ENCODE measurements at regions of chr18 and their contacts with region 1.

Region 1: DNA sequence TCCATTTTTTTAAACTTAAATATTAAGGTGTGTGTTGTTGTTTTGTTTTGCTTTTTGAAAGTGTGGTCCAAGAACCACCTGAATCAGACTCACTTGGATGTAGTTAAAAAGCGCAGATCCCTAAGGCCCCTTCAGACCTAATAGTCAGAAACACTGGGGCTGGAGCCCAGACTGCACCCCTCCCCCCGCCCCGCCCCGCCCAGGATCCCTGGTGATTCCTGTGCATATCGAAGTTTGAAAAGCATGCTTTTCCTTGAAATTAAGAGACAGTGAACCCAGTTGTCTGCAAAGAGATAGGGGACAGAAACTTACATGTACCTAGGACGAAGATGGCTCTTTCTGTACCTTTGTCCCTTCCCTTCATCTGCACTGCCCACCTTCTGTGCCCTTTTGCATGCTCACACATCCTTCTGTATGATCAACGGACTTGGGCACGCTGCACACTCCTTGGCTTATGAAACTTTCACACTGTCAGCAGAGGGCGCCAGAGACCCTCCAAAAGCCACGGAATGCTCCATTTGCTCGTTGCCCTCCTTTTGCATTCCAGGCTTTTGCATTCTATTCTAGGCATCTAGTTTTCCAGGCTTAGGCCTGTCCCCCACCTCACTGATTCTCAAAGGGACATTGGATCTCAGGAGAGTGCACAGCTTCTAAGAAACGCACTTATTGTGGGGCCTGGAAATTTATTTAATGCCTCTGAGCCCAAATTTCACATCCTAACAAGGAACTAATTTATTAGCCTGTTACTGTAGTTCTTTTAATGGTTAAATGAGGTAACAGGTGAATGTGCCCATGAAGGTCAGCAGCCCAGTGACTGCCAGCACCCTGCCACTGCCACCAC is 32.8 kb upstream of the SLC14A1 start:
- DNase-seq: peak; percentile 58 to 88 (median 82)
- ATAC-seq: no peak
- H3K4me3 ChIP-seq: no peak overlapping the region
- H3K4me3 Mint-ChIP-seq: peak overlapping the region; percentile 35
- H3K27ac ChIP-seq: no peak overlapping the region
- H3K27ac Mint-ChIP-seq: no peak overlapping the region
- H3K4me1 ChIP-seq: peaks cover 49% of the 10 kb centered on the region
- H3K4me1 Mint-ChIP-seq: peaks cover 47% of the 10 kb centered on the region
- H3K27me3 ChIP-seq: no peaks in the 10 kb centered on the region
- H3K27me3 Mint-ChIP-seq: peaks cover 2% of the 10 kb centered on the region
- CTCF ChIP-seq: peak; percentile 81

Region 2: DNA sequence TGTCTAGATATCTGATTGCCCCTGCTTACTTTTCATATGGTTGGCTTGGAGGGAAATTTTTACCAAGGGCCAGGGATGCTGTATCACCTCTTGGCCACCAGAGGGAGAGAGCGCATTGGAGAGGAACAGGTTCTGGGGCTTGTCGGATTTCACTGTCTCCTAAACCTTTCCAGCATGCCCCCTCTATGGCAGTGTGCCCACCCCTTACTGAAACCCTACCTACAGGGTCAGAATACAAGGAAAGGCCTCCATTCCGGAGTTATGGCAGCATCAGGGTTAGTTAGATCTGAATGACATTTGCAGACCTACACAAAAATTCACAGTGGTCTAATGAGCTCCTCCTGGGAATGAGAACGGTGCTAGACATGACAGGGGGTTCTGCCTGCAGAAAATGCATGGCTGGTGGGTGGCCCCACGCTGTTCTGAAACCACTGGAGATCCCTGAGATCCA is 70.1 kb before region 1 on chr18:
- CTCF ChIA-PET with region 1: no interaction called
- POLR2A ChIA-PET with region 1: no interaction called
- intact Hi-C with region 1: loop called in 1 of 2 experiments (anchors 2 kb)
- DNase-seq: peak in 7 of 9 experiments; percentile 10 to 66 (median 39)
- ATAC-seq: peak; percentile 56
- H3K4me3 ChIP-seq: no peak overlapping the region
- H3K4me3 Mint-ChIP-seq: no peak overlapping the region
- H3K27ac ChIP-seq: no peak overlapping the region
- H3K27ac Mint-ChIP-seq: no peak overlapping the region
- H3K4me1 ChIP-seq: no peaks in the 10 kb centered on the region
- H3K4me1 Mint-ChIP-seq: no peaks in the 10 kb centered on the region
- H3K27me3 ChIP-seq: no peaks in the 10 kb centered on the region
- H3K27me3 Mint-ChIP-seq: peaks cover 16% of the 10 kb centered on the region
- CTCF ChIP-seq: peak; percentile 92

Region 3: GRCh38 chr18:45738658-45739057 is 47.5 kb after region 1 on chr18:
- CTCF ChIA-PET with region 1: no interaction called
- POLR2A ChIA-PET with region 1: no interaction called
- intact Hi-C with region 1: no loop called
- DNase-seq: no peak
- ATAC-seq: no peak
- H3K4me3 ChIP-seq: no peak overlapping the region
- H3K4me3 Mint-ChIP-seq: no peak overlapping the region
- H3K27ac ChIP-seq: no peak overlapping the region
- H3K27ac Mint-ChIP-seq: no peak overlapping the region
- H3K4me1 ChIP-seq: no peaks in the 10 kb centered on the region
- H3K4me1 Mint-ChIP-seq: no peaks in the 10 kb centered on the region
- H3K27me3 ChIP-seq: no peaks in the 10 kb centered on the region
- H3K27me3 Mint-ChIP-seq: no peaks in the 10 kb centered on the region
- CTCF ChIP-seq: no peak

Region 4: DNA sequence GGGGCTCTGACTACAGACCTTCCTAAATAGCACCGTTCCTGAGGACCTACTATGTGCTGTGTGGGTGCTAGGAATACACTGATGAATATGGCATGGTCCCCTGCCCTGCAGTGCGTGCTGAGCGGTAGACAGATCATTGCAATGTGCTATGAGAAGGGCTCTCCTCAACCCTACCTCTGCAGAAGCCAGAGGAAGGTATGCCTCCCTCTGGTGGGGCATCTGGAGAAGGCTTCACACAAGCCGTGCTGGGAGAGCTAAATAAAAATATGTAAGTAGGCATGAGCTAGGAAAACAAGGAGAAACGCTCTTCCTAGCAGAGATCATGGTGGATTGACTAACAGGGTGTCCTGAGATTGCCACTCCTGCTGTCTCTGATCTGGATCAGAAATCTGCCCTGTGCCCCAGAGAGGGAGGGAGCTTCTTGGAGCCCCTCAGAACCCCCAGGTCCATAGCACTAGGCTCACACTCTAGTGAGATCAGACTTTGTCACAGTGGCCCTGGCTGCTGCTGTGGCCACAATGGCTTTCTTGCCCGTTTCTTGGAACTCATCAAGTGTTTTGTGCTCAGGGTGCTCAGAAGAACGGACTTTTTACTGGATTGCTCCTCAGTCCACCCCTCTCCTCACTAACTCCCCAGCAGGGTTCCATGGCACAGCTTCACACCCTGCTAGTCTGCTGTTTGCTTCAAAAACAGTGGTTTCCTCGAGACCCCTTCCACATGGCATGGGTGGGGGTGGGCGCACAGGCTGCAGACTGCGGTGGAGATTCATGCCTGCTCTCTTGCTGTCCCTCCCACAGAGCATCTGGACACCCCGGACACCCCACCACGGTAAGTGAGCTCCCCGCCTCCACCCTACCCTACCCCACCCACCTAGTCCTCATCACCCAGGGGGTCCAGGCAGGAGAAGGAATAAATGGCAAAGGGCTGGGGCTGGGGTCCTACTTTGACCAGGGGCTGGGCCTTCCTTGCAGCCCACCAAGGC is 148.5 kb after region 1 on chr18:
- CTCF ChIA-PET with region 1: interaction called, 3 read pairs
- POLR2A ChIA-PET with region 1: interaction called, 3 read pairs
- intact Hi-C with region 1: loop called (anchors 1 to 2 kb)
- DNase-seq: peak in 3 of 9 experiments; percentile 49 to 56 (median 50)
- ATAC-seq: peak; percentile 72
- H3K4me3 ChIP-seq: no peak overlapping the region
- H3K4me3 Mint-ChIP-seq: no peak overlapping the region
- H3K27ac ChIP-seq: no peak overlapping the region
- H3K27ac Mint-ChIP-seq: no peak overlapping the region
- H3K4me1 ChIP-seq: peaks cover 8% of the 10 kb centered on the region
- H3K4me1 Mint-ChIP-seq: peaks cover 17% of the 10 kb centered on the region
- H3K27me3 ChIP-seq: peaks cover 0 to 11% of the 10 kb centered on the region in 2 experiments
- H3K27me3 Mint-ChIP-seq: peaks cover 36% of the 10 kb centered on the region
- CTCF ChIP-seq: no peak

Region 5: GRCh38 chr18:45930963-45931362 is 239.8 kb after region 1 on chr18:
- CTCF ChIA-PET with region 1: no interaction called
- POLR2A ChIA-PET with region 1: no interaction called
- intact Hi-C with region 1: no loop called
- DNase-seq: peak in 1 of 9 experiments; percentile 14
- ATAC-seq: peak; percentile 44
- H3K4me3 ChIP-seq: no peak overlapping the region
- H3K4me3 Mint-ChIP-seq: no peak overlapping the region
- H3K27ac ChIP-seq: no peak overlapping the region
- H3K27ac Mint-ChIP-seq: no peak overlapping the region
- H3K4me1 ChIP-seq: no peaks in the 10 kb centered on the region
- H3K4me1 Mint-ChIP-seq: peaks cover 6% of the 10 kb centered on the region
- H3K27me3 ChIP-seq: no peaks in the 10 kb centered on the region
- H3K27me3 Mint-ChIP-seq: no peaks in the 10 kb centered on the region
- CTCF ChIP-seq: no peak

Region 6: DNA sequence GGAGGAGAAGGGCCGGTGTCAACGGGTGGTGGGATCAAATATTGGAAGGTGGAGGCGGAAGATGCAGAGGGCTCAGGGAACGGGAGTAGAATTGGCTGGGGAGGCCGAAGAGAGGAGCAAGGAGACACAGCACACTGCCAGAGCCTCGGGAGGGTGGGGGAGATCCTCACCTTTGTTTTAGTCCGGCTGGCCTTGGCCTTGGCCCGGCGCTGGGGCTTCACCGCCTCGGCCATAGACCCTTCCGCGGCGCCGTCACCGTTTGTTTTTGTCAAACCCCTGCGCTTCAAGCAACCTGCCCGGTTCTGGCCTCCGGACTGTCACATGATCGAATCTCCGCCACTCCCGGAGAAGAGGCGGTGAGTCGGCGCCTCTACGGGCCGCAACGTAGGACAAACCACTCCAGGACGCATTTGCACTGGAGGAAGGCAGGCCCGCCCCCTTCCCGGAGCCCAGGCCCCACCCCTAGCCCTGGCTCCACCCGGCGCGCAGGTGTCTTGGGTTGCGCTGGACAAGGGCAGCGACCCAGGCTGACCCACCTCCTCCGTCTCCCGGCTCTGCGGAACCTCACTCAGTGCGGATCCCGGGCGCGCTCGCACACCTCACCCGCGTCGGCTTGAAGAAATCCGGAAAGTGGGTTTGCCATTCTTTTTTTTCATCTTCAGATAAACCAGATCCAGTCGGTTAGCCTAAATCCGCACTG is 276.0 kb after region 1 on chr18 and contains the start of gene EPG5:
- CTCF ChIA-PET with region 1: no interaction called
- POLR2A ChIA-PET with region 1: no interaction called
- intact Hi-C with region 1: loop called (anchors 1 kb)
- DNase-seq: peak; percentile 75 to 94 (median 90)
- ATAC-seq: peak; percentile 91
- H3K4me3 ChIP-seq: peak within 1 kb of the TSS; percentile 79 to 91
- H3K4me3 Mint-ChIP-seq: peak within 1 kb of the TSS; percentile 98
- H3K27ac ChIP-seq: peak within 1 kb of the TSS; percentile 68 to 74
- H3K27ac Mint-ChIP-seq: peak within 1 kb of the TSS; percentile 91
- H3K4me1 ChIP-seq: peaks cover 33% of the 10 kb centered on the region
- H3K4me1 Mint-ChIP-seq: peaks cover 46% of the 10 kb centered on the region
- H3K27me3 ChIP-seq: no peaks in the 10 kb centered on the region
- H3K27me3 Mint-ChIP-seq: no peaks in the 10 kb centered on the region
- CTCF ChIP-seq: no peak
- total RNA-seq, gene EPG5: 29.1 to 35.5 TPM

Region 7: GRCh38 chr18:46250084-46250811 is 559.1 kb after region 1 on chr18:
- CTCF ChIA-PET with region 1: no interaction called
- POLR2A ChIA-PET with region 1: no interaction called
- intact Hi-C with region 1: loop called in 1 of 2 experiments (anchors 5 kb)
- DNase-seq: peak in 7 of 9 experiments; percentile 16 to 93 (median 51)
- ATAC-seq: peak; percentile 93
- H3K4me3 ChIP-seq: peak overlapping the region; percentile 30 to 44
- H3K4me3 Mint-ChIP-seq: peak overlapping the region; percentile 86
- H3K27ac ChIP-seq: peak overlapping the region; percentile 25 to 99
- H3K27ac Mint-ChIP-seq: peak overlapping the region; percentile 98
- H3K4me1 ChIP-seq: peaks cover 44% of the 10 kb centered on the region
- H3K4me1 Mint-ChIP-seq: peaks cover 50% of the 10 kb centered on the region
- H3K27me3 ChIP-seq: no peaks in the 10 kb centered on the region
- H3K27me3 Mint-ChIP-seq: no peaks in the 10 kb centered on the region
- CTCF ChIP-seq: no peak

Measured in CD8-positive, alpha-beta T cell (primary cell).